ENCODE measurements at regions of chr14 and their contacts with region 1.

Region 1: GRCh38 chr14:61103481-61104339 is 122.7 kb downstream of the SLC38A6 start:
- DNase-seq: peak; percentile 50 to 91
- H3K4me3 ChIP-seq: peak overlapping the region in 1 of 2 donors; percentile 16
- H3K27ac ChIP-seq: peak overlapping the region; percentile 79 to 84
- H3K4me1 ChIP-seq: peaks cover 21 to 27% of the 10 kb centered on the region in 2 donors
- H3K27me3 ChIP-seq: no peaks in the 10 kb centered on the region
- CTCF ChIP-seq: no peak

Region 2: DNA sequence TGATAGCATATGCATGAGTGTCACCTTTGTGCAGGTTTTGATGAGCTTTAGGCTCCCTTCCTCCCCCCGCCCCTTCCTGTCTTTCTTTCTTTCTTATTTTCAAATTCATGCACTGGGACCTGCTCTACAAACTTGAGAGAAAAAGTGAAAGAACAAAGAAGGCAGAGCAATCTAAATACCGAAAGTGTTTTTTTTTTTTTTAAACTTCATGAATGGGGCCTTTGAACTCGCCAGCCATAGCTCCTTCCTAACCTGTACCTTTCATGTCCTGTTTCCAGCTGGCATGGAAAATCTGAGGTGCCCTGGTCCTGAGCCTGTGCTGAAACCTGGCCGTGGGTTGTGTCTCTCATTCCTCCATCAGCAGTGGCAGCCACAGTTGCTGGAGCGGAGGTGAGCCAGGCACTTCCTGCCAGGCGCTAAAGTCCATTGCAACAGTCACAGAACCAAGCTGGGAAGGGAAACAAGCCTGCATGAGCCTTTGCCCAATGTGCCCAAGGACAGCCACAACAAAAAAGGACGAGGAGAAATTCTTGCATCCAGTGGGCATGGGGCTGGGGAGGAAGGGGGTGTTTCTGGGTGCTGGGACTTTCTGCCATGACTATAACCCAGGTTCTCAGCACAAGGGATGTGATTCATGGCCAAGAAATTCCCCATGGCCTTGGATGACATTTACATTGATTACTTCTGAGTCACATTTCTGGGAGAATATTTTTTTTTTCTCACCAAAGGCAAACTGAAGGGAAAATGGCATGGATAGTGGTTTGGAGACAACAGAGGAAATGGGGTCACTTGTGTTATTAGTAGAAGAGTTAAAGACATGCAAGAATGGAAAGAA is 74.7 kb after region 1 on chr14:
- intact Hi-C with region 1: loop called (anchors 2 kb)
- DNase-seq: peak; percentile 33 to 80
- H3K4me3 ChIP-seq: no peak overlapping the region
- H3K27ac ChIP-seq: peak overlapping the region; percentile 35 to 64
- H3K4me1 ChIP-seq: peaks cover 0 to 9% of the 10 kb centered on the region in 2 donors
- H3K27me3 ChIP-seq: no peaks in the 10 kb centered on the region
- CTCF ChIP-seq: no peak

Region 3: GRCh38 chr14:61269321-61270083 is 165.8 kb after region 1 on chr14:
- intact Hi-C with region 1: loop called (anchors 5 kb)
- DNase-seq: peak in 1 of 2 donors; percentile 92
- H3K4me3 ChIP-seq: peak overlapping the region; percentile 35 to 57
- H3K27ac ChIP-seq: no peak overlapping the region
- H3K4me1 ChIP-seq: no peaks in the 10 kb centered on the region
- H3K27me3 ChIP-seq: no peaks in the 10 kb centered on the region
- CTCF ChIP-seq: peak; percentile 69 to 79 (median 70)